CD4-positive, alpha-beta T cell (primary cell): ENCODE measurements at regions of chr2 and their contacts with region 1.

Region 1: GRCh38 chr2:174312581-174313234 is 22.0 kb upstream of the SP9 start:
- DNase-seq: no peak
- ATAC-seq: no peak
- H3K4me3 ChIP-seq: no peak overlapping the region
- H3K4me3 Mint-ChIP-seq: no peak overlapping the region
- H3K27ac ChIP-seq: no peak overlapping the region
- H3K27ac Mint-ChIP-seq: no peak overlapping the region
- H3K4me1 ChIP-seq: no peaks in the 10 kb centered on the region
- H3K4me1 Mint-ChIP-seq: no peaks in the 10 kb centered on the region
- H3K27me3 ChIP-seq: peaks cover 31 to 35% of the 10 kb centered on the region in 2 experiments
- H3K27me3 Mint-ChIP-seq: peaks cover 88% of the 10 kb centered on the region
- CTCF ChIP-seq: no peak

Region 2: DNA sequence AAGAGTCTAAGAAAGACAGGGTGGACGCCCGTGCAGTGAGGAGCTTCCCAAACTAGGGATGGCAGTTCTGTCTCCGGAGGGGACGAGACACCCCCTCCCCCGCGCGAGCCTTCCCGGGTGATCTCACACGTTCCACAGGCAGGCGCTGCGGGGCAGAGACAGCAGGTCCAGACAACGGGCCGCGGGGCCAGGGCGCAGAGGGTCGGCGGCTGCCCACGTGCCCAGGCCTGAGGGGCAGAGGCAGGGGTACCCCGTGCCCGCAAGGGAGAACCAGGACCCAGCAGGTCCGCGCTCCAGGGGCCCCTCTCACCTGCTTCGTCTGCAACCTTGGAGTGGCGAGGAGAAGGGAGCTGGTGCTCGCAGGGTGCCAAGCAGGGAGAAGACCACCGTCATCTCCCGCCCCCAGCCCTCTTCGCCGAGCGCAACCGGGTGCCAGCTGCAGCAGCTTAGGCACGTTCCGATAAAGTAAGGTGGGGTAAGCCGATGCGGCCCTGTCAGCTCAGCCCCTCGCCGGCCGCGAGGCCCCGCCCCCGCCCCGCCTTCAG is 173.9 kb after region 1 on chr2 and contains the start of gene GPR155:
- CTCF ChIA-PET with region 1: no interaction called
- POLR2A ChIA-PET with region 1: no interaction called
- intact Hi-C with region 1: no loop called
- DNase-seq: peak in 11 of 14 experiments; percentile 23 to 67 (median 41)
- ATAC-seq: peak; percentile 37
- H3K4me3 ChIP-seq: peak within 1 kb of the TSS; percentile 83
- H3K4me3 Mint-ChIP-seq: peak within 1 kb of the TSS; percentile 94
- H3K27ac ChIP-seq: peak within 1 kb of the TSS; percentile 50 to 75
- H3K27ac Mint-ChIP-seq: peak within 1 kb of the TSS; percentile 95
- H3K4me1 ChIP-seq: peaks cover 31% of the 10 kb centered on the region
- H3K4me1 Mint-ChIP-seq: peaks cover 76% of the 10 kb centered on the region
- H3K27me3 ChIP-seq: no peaks in the 10 kb centered on the region
- H3K27me3 Mint-ChIP-seq: no peaks in the 10 kb centered on the region
- CTCF ChIP-seq: no peak
- total RNA-seq, gene GPR155: 8.3 to 9.0 TPM

Region 3: GRCh38 chr2:176072951-176073904 is 1760.5 kb after region 1 on chr2:
- CTCF ChIA-PET with region 1: no interaction called
- POLR2A ChIA-PET with region 1: no interaction called
- intact Hi-C with region 1: loop called in 1 of 2 experiments (anchors 5 kb)
- DNase-seq: no peak
- ATAC-seq: no peak
- H3K4me3 ChIP-seq: no peak overlapping the region
- H3K4me3 Mint-ChIP-seq: no peak overlapping the region
- H3K27ac ChIP-seq: no peak overlapping the region
- H3K27ac Mint-ChIP-seq: no peak overlapping the region
- H3K4me1 ChIP-seq: peaks cover 11% of the 10 kb centered on the region
- H3K4me1 Mint-ChIP-seq: peaks cover 8% of the 10 kb centered on the region
- H3K27me3 ChIP-seq: peaks cover 89 to 96% of the 10 kb centered on the region in 2 experiments
- H3K27me3 Mint-ChIP-seq: peaks cover 96% of the 10 kb centered on the region
- CTCF ChIP-seq: no peak